Aorta (tissue), 5 donors: ENCODE measurements at regions of chr20 and their contacts with region 1.

Region 1: DNA sequence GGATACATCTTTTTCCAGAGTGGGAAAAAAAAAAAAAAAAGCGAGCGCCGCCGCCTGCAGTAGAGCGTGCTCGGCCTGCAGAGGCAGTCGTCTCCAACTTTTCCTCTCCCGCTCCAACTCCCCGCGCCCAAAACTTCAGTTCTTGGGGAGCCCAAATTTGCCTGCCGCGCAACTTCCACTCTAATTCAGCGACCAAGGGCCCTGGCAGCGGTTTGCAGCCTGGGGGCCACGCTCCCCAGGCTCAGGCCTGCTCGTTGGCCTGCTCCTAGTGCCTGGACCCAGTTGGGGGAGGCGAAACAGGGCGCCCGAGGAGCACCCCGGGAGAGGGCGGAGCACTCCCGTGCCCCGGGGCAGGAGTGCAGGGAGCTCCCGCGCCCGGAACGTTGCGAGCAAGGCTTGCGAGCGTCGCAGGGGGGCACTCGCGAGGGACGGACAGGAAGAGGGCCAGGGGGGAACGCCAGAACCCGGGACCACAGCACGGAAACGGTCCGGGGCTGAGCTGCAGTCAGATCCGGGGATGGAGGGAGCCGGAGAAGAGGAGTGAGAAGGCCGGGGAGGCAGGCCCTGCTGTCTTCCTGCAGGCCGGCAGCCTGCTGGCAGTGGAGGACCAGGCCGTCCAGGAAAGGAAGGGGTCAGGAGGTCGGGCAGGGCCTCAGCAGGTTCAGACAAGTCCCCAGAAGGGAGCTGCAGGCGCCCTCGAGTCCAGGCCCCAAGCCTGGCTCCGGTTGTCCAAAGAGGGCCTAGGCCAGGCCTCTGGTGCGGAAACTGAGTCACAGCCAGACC is at the start of gene STX16:
- DNase-seq: peak; percentile 95 to 96
- ATAC-seq: peak; percentile 96
- H3K4me3 ChIP-seq: peak within 1 kb of the TSS; percentile 78 to 81
- H3K27ac ChIP-seq: peak within 1 kb of the TSS; percentile 70 to 89
- H3K4me1 ChIP-seq: peaks cover 4 to 7% of the 10 kb centered on the region in 2 donors
- H3K27me3 ChIP-seq: no peaks in the 10 kb centered on the region
- total RNA-seq, gene STX16: 48.7 to 75.7 TPM

Region 2: DNA sequence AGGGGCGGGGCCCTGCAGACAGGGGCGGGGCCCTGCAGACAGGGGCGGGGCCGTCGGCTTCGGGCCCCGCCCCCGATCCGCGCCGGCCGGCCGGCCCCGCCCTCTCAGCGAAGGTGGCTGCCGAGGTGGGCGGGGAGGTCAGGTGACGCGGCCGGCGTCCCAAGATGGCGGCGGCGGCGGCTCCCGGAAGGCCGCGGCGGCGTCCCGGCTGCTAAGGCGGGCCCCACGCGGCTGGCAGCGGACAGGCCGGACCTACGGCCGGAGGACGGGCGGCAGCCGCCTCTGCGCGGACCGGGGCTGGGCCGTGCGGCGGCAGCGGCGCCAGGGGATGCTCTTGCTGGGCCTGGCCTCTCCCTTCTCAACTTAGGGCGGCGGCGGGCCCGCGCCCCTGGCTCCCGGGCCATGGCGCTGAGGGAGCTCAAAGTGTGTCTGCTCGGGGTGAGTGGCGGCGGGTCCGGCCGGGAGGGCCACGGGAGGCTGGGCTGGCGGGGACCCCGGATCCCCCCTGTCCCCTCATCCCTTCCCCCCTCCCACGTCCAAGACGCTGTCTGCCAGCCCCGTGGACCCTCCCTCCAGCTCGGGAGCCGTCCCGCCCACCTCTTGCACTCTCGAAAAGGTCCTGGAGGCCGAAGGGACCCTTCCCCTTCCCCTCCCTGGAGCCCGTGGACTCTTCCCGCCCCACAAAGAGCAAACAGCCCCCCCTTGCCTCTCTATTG is 341.2 kb before region 1 on chr20 and contains the start of gene RAB22A:
- intact Hi-C with region 1: loop called in 1 of 2 experiments (anchors 10 kb)
- DNase-seq: peak; percentile 87 to 93
- ATAC-seq: peak; percentile 95
- H3K4me3 ChIP-seq: peak within 1 kb of the TSS; percentile 98 to 99
- H3K27ac ChIP-seq: peak within 1 kb of the TSS in 1 of 2 donors; percentile 87
- H3K4me1 ChIP-seq: no peaks in the 10 kb centered on the region
- H3K27me3 ChIP-seq: no peaks in the 10 kb centered on the region
- total RNA-seq, gene RAB22A: 21.8 to 26.8 TPM

Region 3: DNA sequence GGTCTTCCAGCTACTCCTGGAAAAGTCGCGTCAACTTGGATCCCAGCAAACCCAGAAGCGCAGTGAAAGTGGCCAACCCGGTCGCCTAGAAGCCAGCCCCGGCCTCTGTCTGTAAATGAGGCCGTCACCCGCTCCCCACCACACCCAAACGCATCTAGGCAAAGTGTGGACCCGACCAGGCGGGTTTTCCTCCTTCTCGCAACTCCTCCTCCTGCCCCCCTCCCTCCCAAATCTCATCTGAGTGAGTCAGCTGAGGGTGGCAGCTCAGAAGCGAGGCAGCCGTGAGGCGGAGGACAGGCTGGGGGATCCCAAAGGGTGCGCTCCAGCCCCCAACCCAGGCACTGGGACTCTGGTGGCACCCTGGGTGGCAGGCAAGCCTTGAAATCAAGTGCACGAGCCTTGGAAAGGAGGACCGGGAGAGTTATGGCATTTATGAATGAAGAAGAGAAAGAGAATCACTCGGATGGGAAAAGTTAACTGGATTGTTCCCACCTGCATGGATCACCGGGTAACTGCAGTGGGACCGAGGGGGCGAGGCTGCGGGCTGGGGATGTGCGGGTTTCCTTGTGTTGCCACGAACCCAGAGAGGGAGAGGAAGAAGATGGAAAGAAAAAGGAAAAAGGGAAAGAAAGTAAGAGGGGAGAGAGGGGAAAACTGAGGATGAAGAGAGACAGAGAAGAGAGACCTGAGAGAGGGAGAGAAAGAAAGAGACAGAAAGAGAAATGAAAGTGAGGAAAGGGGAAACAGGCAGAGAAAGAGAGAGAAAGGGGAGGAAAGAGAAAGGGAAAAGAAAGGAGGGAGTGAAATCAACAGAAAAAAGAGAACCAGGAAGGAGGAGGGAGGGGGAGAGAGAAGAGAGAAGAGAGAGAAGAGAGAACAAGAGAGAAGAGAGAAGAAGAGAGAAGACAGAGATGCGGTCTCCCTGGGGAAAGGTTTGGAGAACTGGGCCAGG is 135.5 kb before region 1 on chr20 and contains the start of gene APCDD1L:
- intact Hi-C with region 1: loop called (anchors 2 to 10 kb)
- DNase-seq: peak; percentile 68 to 84
- ATAC-seq: peak; percentile 61
- H3K4me3 ChIP-seq: peak within 1 kb of the TSS; percentile 5 to 56
- H3K27ac ChIP-seq: no peak within 1 kb of the TSS
- H3K4me1 ChIP-seq: no peaks in the 10 kb centered on the region
- H3K27me3 ChIP-seq: no peaks in the 10 kb centered on the region
- total RNA-seq, gene APCDD1L: 1.7 to 14.6 TPM

Region 4: DNA sequence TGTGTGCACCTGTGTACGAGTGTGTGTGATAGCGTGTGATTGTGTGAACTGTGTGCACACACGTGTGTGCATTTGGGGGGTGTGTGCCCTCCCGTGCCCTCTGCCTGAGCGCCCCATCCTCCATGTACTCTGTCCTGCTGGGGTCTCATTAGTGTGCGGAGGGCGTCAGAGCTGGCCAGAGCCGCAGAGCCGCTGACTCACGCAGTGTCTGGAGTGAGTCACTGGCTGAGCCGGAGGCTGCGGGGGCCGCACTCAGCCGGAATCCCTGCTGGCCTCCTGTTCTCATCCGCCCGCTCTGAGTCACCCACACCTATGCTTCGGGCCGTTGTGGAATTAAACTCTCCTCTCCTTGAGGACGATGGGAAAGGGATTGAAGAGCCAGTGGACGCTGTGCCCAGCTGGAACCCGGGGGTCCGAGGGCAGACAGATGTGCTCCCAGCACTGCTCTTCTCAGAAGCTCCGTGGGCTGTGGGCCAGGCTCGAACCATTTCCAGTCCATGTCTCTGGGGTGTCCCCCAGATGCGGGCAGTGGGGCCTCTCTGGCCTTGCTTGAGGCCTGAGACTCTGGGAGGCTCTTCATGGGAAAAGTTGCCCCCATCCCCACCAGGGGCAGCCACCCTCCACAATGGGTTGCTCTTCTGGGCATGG is 27.0 kb before region 1 on chr20:
- intact Hi-C with region 1: loop called in 1 of 2 experiments (anchors 2 kb)
- DNase-seq: peak; percentile 91 to 92
- ATAC-seq: peak; percentile 87
- H3K4me3 ChIP-seq: no peak overlapping the region
- H3K27ac ChIP-seq: no peak overlapping the region
- H3K4me1 ChIP-seq: no peaks in the 10 kb centered on the region
- H3K27me3 ChIP-seq: no peaks in the 10 kb centered on the region

Region 5: DNA sequence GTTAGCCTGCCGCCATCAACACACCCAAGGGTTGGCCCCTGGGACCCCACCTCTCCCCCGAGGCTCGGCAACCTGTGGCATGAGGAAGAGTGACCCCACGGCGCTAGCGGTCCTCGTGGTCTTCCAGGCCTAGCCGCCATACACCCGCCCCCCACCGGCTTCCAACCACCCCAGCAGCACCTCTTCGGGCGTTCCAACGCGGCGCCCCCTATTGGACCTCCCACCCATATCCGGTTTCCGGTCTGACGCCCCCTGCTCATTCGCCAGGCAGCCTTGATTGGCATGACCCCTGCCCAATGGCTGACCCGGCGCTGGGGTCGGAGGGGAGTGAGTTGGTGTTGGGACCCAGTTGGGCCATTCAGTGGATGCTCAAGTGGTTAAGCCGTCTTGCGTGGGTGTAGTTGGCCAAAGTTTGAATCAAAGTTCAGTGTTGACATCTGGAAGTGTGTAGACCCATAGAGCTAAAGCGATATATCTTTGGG is 199.8 kb after region 1 on chr20 and contains the start of gene GNAS-AS1:
- intact Hi-C with region 1: loop called in 1 of 2 experiments (anchors 5 kb)
- DNase-seq: peak; percentile 84 to 90
- ATAC-seq: peak; percentile 48
- H3K4me3 ChIP-seq: peak within 1 kb of the TSS in 1 of 2 donors; percentile 16
- H3K27ac ChIP-seq: no peak within 1 kb of the TSS
- H3K4me1 ChIP-seq: no peaks in the 10 kb centered on the region
- H3K27me3 ChIP-seq: no peaks in the 10 kb centered on the region
- total RNA-seq, gene GNAS-AS1: 1.2 to 1.7 TPM

Region 6: GRCh38 chr20:59055295-59055694 is 404.3 kb after region 1 on chr20:
- intact Hi-C with region 1: no loop called
- DNase-seq: no peak
- ATAC-seq: no peak
- H3K4me3 ChIP-seq: no peak overlapping the region
- H3K27ac ChIP-seq: no peak overlapping the region
- H3K4me1 ChIP-seq: no peaks in the 10 kb centered on the region
- H3K27me3 ChIP-seq: no peaks in the 10 kb centered on the region